Caco-2 (cell line): ENCODE measurements at regions of chr4 and their contacts with region 1.

Region 1: GRCh38 chr4:781493-782216 is 44.3 kb downstream of the CPLX1 start:
- DNase-seq: peak; percentile 99
- H3K4me3 ChIP-seq: peak overlapping the region; percentile 98
- H3K4me3 Mint-ChIP-seq: peak overlapping the region; percentile 90
- H3K27ac Mint-ChIP-seq: peak overlapping the region; percentile 89
- H3K4me1 ChIP-seq: peaks cover 11% of the 10 kb centered on the region
- H3K4me1 Mint-ChIP-seq: peaks cover 29% of the 10 kb centered on the region
- H3K27me3 ChIP-seq: no peaks in the 10 kb centered on the region
- H3K27me3 Mint-ChIP-seq: no peaks in the 10 kb centered on the region
- CTCF ChIP-seq: no peak

Region 2: GRCh38 chr4:705278-706082 is 76.2 kb before region 1 on chr4 and contains the start of gene PCGF3:
- CTCF ChIA-PET with region 1: no interaction called
- POLR2A ChIA-PET with region 1: interaction called, 10 read pairs
- intact Hi-C with region 1: no loop called
- DNase-seq: peak; percentile 97
- H3K4me3 ChIP-seq: peak within 1 kb of the TSS; percentile 87
- H3K4me3 Mint-ChIP-seq: peak within 1 kb of the TSS; percentile 81
- H3K27ac Mint-ChIP-seq: peak within 1 kb of the TSS; percentile 66
- H3K4me1 ChIP-seq: no peaks in the 10 kb centered on the region
- H3K4me1 Mint-ChIP-seq: no peaks in the 10 kb centered on the region
- H3K27me3 ChIP-seq: no peaks in the 10 kb centered on the region
- H3K27me3 Mint-ChIP-seq: no peaks in the 10 kb centered on the region
- CTCF ChIP-seq: no peak
- total RNA-seq, gene PCGF3: 36.6 and 38.0 TPM in 2 replicates

Region 3: GRCh38 chr4:804804-805203 is 23.1 kb after region 1 on chr4:
- CTCF ChIA-PET with region 1: no interaction called
- POLR2A ChIA-PET with region 1: no interaction called
- intact Hi-C with region 1: loop called (anchors 1 kb)
- DNase-seq: peak; percentile 72 to 75
- H3K4me3 ChIP-seq: peak overlapping the region; percentile 72
- H3K4me3 Mint-ChIP-seq: peak overlapping the region; percentile 92
- H3K27ac Mint-ChIP-seq: peak overlapping the region; percentile 91
- H3K4me1 ChIP-seq: no peaks in the 10 kb centered on the region
- H3K4me1 Mint-ChIP-seq: no peaks in the 10 kb centered on the region
- H3K27me3 ChIP-seq: no peaks in the 10 kb centered on the region
- H3K27me3 Mint-ChIP-seq: no peaks in the 10 kb centered on the region
- CTCF ChIP-seq: no peak